A673 (cell line): ENCODE measurements at regions of chr13 and their contacts with region 1.

Region 1: GRCh38 chr13:100825557-100825956 is 151.0 kb upstream of the TMTC4 start:
- DNase-seq: no peak
- H3K4me3 ChIP-seq: no peak overlapping the region
- H3K27ac ChIP-seq: no peak overlapping the region
- H3K4me1 ChIP-seq: peaks cover 5% of the 10 kb centered on the region
- H3K27me3 ChIP-seq: no peaks in the 10 kb centered on the region
- CTCF ChIP-seq: no peak

Region 2: DNA sequence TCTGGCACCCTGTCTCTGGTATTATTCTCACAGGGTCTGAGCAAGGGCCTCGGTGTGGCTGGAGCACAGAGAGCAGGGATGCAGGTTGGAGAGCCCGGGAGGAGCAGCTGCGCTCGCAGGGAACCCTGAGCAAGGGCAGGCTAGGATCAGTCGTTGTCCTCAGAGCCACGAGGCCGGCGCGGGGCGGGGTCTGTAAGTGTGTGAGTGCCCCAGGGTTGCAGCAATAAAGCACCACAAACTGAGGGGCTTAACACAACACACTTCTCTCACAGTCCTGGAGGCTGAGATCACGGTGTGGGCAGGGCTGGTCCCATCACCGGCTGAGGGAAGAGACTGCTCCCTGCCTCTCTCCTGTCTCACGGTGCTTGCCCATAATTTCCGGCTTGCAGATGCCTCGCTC is 198.4 kb before region 1 on chr13:
- CTCF ChIA-PET with region 1: interaction called, 12 read pairs
- POLR2A ChIA-PET with region 1: no interaction called
- intact Hi-C with region 1: no loop called
- DNase-seq: no peak
- H3K4me3 ChIP-seq: no peak overlapping the region
- H3K27ac ChIP-seq: no peak overlapping the region
- H3K4me1 ChIP-seq: peaks cover 19% of the 10 kb centered on the region
- H3K27me3 ChIP-seq: no peaks in the 10 kb centered on the region
- CTCF ChIP-seq: no peak